Ovary (tissue), 10 donors: ENCODE measurements at regions of chr3 and their contacts with region 1.

Region 1: DNA sequence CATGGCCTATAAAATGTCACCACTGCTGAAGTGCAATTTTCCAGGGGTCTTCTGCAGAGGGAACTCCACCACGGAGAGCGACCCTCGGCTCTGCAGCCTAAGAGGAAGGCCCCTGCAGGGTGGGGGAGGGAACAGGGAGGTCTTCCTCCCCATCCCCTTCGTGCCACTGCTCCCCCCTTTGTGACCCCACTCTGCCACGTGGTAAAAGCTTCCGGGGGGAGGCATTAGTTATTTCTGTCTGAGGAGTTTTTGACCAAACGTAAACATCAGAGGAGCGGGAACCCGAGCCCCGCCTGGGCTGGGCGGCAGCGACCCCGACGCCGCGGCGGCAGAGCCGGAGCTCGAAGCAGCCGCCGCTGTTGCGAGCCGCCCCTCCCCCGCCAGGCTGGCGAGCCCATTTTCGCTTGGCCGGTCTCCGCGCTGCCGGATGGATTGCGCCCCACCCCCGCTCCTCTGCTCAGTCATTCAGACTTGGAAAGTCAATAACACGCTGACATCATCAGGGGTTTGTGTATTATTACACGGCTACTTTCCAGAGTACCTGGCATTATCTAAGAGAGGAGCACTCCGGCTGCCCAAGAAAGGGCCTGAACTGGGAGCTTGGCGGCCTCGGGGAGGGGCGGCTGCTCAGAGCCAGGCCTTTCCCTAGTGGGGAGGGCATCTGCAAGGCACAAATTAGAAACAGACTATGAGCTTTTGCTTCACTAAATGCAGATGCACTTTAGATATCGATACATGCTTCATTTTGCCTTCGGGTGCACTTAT is 162.5 kb upstream of the TBL1XR1 start:
- DNase-seq: peak; percentile 94 to 98 (median 97)
- H3K4me3 ChIP-seq: peak overlapping the region; percentile 32
- H3K27ac ChIP-seq: peak overlapping the region in 1 of 2 donors; percentile 92
- H3K4me1 ChIP-seq: peaks cover 20% of the 10 kb centered on the region
- H3K27me3 ChIP-seq: no peaks in the 10 kb centered on the region
- CTCF ChIP-seq: no peak
- EP300 ChIP-seq: peak; percentile 92
- POLR2A ChIP-seq: no peak

Region 2: DNA sequence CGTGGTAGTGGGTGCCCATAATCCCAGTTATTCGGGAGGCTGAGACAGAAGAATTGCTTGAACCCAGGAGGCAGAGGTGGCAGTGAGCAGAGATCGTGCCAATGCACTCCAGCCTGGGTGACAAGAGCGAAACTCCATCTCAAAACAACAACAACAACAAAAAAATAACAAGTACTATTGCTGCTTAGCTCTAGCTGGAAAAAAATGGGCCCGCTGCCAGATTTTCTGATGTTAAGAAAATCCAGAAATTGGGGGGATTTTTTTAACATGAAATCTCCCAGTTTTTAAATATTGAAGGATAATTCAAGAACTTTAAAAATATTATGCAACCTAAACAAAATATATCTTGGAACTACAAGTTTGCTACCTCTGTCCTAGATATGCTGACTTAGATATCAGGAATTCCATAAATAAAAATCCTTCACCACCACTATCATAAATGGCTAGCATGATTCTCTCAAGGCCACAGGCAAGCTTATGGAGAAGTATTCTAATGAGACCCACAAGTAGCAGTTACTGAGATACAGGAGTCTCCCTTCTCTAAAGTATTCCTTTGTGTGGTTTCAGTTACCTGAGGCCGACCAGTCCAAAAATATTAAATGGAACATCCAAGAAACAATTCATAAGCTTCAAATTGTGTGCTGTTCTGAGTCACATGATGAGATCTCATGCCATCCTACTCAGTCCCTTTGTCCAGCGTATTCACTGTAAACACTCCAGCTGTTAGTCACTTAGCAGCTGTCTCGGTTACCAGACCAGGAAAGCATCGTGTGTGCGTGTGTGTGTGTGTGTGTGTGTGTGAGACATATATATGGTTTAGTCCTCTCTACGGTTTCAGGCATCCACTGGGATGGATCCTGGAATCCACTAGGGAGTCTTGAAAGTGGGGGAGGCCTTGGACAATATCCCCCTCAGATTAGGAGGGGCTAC is 439.7 kb before region 1 on chr3:
- intact Hi-C with region 1: no loop called
- DNase-seq: peak in 4 of 5 donors; percentile 10 to 43 (median 29)
- H3K4me3 ChIP-seq: no peak overlapping the region
- H3K27ac ChIP-seq: no peak overlapping the region
- H3K4me1 ChIP-seq: peaks cover 2% of the 10 kb centered on the region
- H3K27me3 ChIP-seq: peaks cover 2% of the 10 kb centered on the region
- CTCF ChIP-seq: no peak
- EP300 ChIP-seq: no peak
- POLR2A ChIP-seq: no peak

Region 3: DNA sequence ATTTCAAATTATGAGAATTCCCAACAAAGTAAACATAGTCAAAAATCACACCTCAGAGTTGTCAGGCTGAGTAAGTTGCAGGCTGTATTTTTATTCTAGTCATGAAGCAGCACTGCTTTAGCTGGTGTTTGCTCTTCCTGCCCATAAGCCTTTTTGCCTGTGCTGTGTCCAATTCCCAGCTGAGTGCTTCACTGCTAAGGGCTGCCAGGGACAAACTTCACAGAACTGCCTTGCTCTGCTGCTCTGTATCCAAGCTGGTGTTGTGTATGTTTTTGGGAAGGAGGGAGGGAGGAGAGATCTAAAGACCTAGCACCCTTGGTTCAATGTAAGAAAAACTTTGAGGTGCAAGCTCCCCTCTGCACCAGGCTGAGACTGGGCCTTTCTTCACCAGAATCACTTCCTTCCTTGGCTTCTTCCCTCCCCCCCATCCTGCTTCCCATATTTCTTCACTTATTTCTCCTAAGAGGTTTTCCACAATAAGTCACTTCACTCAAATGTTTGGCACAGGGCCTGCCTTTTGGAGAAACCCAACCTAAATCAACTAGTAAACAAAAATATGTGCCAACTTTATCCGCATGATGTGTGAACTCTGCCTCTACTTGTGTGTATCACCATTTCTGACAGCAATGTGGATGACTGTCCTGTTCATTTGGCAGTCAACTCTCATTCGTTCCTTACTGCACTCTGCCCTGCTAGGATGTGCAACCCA is 318.6 kb before region 1 on chr3:
- intact Hi-C with region 1: loop called in 1 of 4 experiments (anchors 10 kb)
- DNase-seq: peak in 2 of 5 donors; percentile 36 to 50
- H3K4me3 ChIP-seq: no peak overlapping the region
- H3K27ac ChIP-seq: no peak overlapping the region
- H3K4me1 ChIP-seq: peaks cover 3% of the 10 kb centered on the region
- H3K27me3 ChIP-seq: no peaks in the 10 kb centered on the region
- CTCF ChIP-seq: no peak
- EP300 ChIP-seq: no peak
- POLR2A ChIP-seq: no peak

Region 4: GRCh38 chr3:177069514-177070329 is 290.1 kb before region 1 on chr3:
- intact Hi-C with region 1: loop called in 1 of 4 experiments (anchors 10 kb)
- DNase-seq: no peak
- H3K4me3 ChIP-seq: no peak overlapping the region
- H3K27ac ChIP-seq: no peak overlapping the region
- H3K4me1 ChIP-seq: peaks cover 3% of the 10 kb centered on the region
- H3K27me3 ChIP-seq: no peaks in the 10 kb centered on the region
- CTCF ChIP-seq: no peak
- EP300 ChIP-seq: no peak
- POLR2A ChIP-seq: no peak

Region 5: DNA sequence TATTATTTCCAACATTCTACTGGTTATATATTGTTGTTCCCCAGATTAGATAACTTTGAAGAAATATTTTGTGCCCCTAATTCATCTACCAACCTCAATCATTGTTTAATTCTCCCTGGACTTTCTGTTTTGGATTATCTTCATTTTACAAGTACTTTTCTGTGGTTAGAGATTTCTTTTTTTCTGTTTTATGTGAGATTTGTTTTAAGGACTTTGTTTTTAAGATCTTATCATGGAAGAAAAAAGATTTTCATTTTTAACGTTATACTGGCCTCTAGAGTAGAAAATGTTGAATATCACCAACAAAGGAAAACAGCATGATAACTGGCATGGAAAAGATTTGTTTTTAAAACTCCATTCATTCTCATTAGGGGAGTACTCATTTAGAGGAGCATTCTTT is 965.6 kb after region 1 on chr3:
- intact Hi-C with region 1: loop called in 2 of 4 experiments (anchors 10 kb)
- DNase-seq: no peak
- H3K4me3 ChIP-seq: no peak overlapping the region
- H3K27ac ChIP-seq: no peak overlapping the region
- H3K4me1 ChIP-seq: peaks cover 8% of the 10 kb centered on the region
- H3K27me3 ChIP-seq: no peaks in the 10 kb centered on the region
- CTCF ChIP-seq: peak in 2 of 3 donors; percentile 7 to 23
- EP300 ChIP-seq: no peak
- POLR2A ChIP-seq: no peak